Dorsolateral prefrontal cortex (tissue), 120 donors: ENCODE measurements at regions of chr10 and their contacts with region 1.

Region 1: GRCh38 chr10:30534465-30535144 is 94.9 kb downstream of the LYZL2 start:
- DNase-seq: peak in 9 of 10 donors; percentile 34 to 81 (median 57)
- H3K4me3 ChIP-seq: no peak overlapping the region
- H3K27ac ChIP-seq: no peak overlapping the region
- H3K27me3 ChIP-seq: peaks cover 0 to 8% (median 0%) of the 10 kb centered on the region in 45 donors
- CTCF ChIP-seq: peak; percentile 69 to 96 (median 86)

Region 2: DNA sequence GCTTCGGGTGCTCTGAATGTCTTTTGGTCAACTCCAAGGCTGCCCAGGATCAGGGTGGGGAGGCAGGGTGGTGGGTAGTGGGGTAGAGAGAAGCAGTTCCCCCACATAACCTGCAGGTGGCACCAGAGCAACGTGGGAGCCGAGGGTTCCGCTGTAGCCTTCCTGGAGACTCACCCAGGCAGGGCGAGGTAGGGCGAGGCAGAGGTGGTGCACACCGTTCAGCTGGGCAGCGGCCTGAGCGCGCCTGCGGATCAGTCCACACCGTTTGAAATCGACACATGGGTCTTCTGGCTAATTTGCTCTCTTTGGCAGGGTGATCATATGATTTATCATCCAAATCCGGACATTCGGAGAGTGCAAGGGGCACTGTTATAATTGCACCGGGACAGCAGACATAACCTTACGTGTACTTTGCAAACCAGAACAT is 142.0 kb before region 1 on chr10:
- intact Hi-C with region 1: loop called (anchors 1 to 2 kb)
- DNase-seq: peak in 9 of 10 donors; percentile 18 to 78 (median 50)
- H3K4me3 ChIP-seq: peak overlapping the region in 27 of 59 donors; percentile 4 to 54 (median 31)
- H3K27ac ChIP-seq: no peak overlapping the region
- H3K27me3 ChIP-seq: peaks cover 0 to 23% (median 0%) of the 10 kb centered on the region in 45 donors
- CTCF ChIP-seq: peak; percentile 56 to 96 (median 90)

Region 3: DNA sequence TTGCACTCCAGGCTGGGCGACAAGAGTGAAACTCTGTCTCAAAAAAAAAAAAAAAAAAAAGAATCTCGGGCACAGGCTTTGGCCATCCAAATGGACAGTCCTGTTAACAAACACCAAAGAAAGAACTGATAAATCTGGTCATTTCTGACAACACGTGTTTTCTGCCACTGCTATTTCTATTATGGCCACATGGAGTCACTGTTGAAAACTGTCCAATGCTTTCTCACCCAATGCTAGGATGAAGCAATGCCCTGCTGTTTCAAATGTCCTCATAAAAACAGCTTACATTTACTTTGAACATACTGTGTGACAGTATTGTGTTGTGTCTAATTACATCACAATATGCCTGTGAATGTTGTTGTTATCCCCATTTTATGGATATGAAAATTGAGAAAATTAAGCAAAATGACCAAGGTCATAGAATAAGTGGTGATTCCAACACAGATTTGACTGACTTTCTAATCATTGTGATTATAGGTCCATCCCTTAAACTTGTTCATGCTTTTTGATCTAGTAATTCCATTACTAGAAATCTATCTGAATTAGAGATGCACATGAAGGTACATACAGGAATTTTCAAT is 120.5 kb before region 1 on chr10:
- intact Hi-C with region 1: loop called in 1 of 2 experiments (anchors 5 kb)
- DNase-seq: no peak
- H3K4me3 ChIP-seq: no peak overlapping the region
- H3K27ac ChIP-seq: no peak overlapping the region
- H3K27me3 ChIP-seq: no peaks in the 10 kb centered on the region
- CTCF ChIP-seq: peak; percentile 49 to 83 (median 71)

Region 4: DNA sequence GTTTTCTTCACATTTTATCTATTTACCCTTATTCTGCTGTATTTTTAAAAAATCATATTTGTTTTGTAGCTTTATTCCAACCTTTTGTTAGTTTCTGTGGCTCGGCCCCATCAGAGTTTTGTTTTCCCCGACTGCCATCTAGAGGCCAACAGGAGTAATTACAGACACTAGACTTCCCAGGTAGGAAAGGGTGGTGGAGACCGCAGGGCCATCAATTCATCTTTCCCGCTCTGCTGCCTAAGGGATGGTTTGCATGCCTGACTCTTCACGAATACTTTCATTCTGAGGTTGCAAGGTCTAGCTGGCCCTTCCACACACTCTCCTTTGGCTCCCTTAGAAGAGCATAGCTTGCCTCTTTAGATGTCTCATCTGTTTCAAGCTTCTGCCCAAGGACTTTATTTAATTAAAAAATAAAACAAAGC is 56.7 kb after region 1 on chr10:
- intact Hi-C with region 1: loop called in 1 of 2 experiments (anchors 5 kb)
- DNase-seq: peak in 3 of 10 donors; percentile 9 to 27 (median 10)
- H3K4me3 ChIP-seq: no peak overlapping the region
- H3K27ac ChIP-seq: no peak overlapping the region
- H3K27me3 ChIP-seq: peaks cover 0 to 3% (median 0%) of the 10 kb centered on the region in 45 donors
- CTCF ChIP-seq: peak; percentile 61 to 92 (median 81)